MCF 10A (cell line): ENCODE measurements at regions of chr11 and their contacts with region 1.

Region 1: DNA sequence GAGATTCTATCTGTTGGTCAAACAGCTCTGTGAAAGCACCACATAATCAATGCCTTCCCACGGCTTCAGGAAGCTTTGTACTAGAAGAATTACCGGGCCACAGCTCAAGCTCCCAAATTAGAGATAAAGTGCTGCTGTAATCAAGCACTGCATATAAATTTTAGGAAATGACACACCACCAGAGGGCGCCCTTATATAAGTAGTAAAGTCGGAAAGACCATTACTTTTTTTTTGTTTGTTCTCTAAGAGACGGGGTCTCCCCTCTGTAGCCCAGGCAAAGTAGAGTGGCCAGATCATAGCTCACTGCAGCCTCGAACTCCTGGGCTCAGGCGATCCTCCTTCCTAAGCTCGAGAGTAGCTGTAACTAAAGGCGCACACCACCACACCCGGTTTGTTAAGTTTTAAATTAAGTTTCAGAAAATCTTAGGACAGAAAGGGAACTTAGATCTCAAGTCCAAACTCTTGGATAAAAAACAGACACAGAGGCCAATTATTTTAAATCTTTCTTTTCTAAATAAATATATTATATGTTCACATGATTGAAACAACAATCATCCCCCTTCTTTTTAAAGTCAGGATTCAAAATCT is 32.6 kb downstream of the PRCP start:
- DNase-seq: peak; percentile 71
- H3K4me3 Mint-ChIP-seq: no peak overlapping the region
- H3K27ac Mint-ChIP-seq: no peak overlapping the region
- H3K4me1 Mint-ChIP-seq: peaks cover 23% of the 10 kb centered on the region
- H3K27me3 Mint-ChIP-seq: no peaks in the 10 kb centered on the region
- CTCF ChIP-seq: peak; percentile 75

Region 2: DNA sequence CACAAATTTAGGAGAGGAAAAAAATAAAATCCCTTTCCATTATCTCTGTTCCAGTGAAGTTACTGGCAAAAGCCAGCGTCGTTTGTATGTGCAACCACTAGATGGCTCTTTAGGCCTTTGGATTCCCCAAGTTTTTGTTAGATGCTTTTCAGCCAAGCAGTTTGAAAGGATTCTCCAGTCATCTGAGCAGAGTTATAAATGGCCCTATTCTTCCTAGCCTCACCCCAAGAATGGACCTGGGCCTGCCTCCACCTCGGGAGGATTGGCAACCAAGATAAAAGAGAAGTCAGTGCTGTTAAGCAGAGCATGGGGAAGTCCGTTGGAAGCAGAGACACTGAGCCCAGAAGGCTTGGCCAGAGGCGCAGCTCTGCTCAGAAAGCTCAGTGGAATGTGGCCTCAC is 149.3 kb before region 1 on chr11:
- CTCF ChIA-PET with region 1: interaction called, 23 read pairs
- POLR2A ChIA-PET with region 1: interaction called, 3 read pairs
- intact Hi-C with region 1: loop called (anchors 1 kb)
- DNase-seq: peak; percentile 58
- H3K4me3 Mint-ChIP-seq: no peak overlapping the region
- H3K27ac Mint-ChIP-seq: no peak overlapping the region
- H3K4me1 Mint-ChIP-seq: no peaks in the 10 kb centered on the region
- H3K27me3 Mint-ChIP-seq: no peaks in the 10 kb centered on the region
- CTCF ChIP-seq: peak; percentile 60

Region 3: GRCh38 chr11:82845356-82846353 is 21.9 kb before region 1 on chr11:
- CTCF ChIA-PET with region 1: interaction called, 32 read pairs
- POLR2A ChIA-PET with region 1: no interaction called
- intact Hi-C with region 1: no loop called
- DNase-seq: no peak
- H3K4me3 Mint-ChIP-seq: no peak overlapping the region
- H3K27ac Mint-ChIP-seq: peak overlapping the region; percentile 63
- H3K4me1 Mint-ChIP-seq: peaks cover 5% of the 10 kb centered on the region
- H3K27me3 Mint-ChIP-seq: no peaks in the 10 kb centered on the region
- CTCF ChIP-seq: no peak

Region 4: GRCh38 chr11:82889133-82890001 is 21.8 kb after region 1 on chr11:
- CTCF ChIA-PET with region 1: interaction called, 30 read pairs
- POLR2A ChIA-PET with region 1: interaction called, 5 read pairs
- intact Hi-C with region 1: no loop called
- DNase-seq: no peak
- H3K4me3 Mint-ChIP-seq: no peak overlapping the region
- H3K27ac Mint-ChIP-seq: no peak overlapping the region
- H3K4me1 Mint-ChIP-seq: no peaks in the 10 kb centered on the region
- H3K27me3 Mint-ChIP-seq: no peaks in the 10 kb centered on the region
- CTCF ChIP-seq: no peak

Region 5: DNA sequence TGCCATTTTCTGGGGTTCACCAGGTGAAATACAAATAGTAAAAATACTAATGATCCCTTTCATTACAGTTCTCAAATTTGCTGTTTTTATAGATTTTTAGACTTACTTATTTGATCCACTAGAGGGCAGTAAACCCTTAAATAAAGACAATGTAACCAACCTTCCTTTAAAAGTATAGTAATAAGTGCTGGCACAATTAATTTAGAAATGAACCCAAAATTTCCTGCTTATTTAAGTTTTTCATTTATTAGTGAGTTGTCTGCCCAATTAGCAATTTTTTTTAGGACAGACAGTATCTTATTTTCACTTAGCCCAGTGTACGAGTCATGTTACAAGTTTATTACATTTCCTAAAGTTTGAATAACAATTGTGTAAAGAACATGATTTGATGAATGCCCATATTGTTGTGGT is 38.7 kb after region 1 on chr11:
- CTCF ChIA-PET with region 1: interaction called, 101 read pairs
- POLR2A ChIA-PET with region 1: interaction called, 75 read pairs
- intact Hi-C with region 1: no loop called
- DNase-seq: peak; percentile 40
- H3K4me3 Mint-ChIP-seq: peak overlapping the region; percentile 37
- H3K27ac Mint-ChIP-seq: peak overlapping the region; percentile 40
- H3K4me1 Mint-ChIP-seq: peaks cover 34% of the 10 kb centered on the region
- H3K27me3 Mint-ChIP-seq: no peaks in the 10 kb centered on the region
- CTCF ChIP-seq: peak; percentile 46

Region 6: GRCh38 chr11:83219095-83219494 is 351.5 kb after region 1 on chr11:
- CTCF ChIA-PET with region 1: interaction called, 11 read pairs
- POLR2A ChIA-PET with region 1: no interaction called
- intact Hi-C with region 1: no loop called
- DNase-seq: peak; percentile 25
- H3K4me3 Mint-ChIP-seq: no peak overlapping the region
- H3K27ac Mint-ChIP-seq: no peak overlapping the region
- H3K4me1 Mint-ChIP-seq: peaks cover 6% of the 10 kb centered on the region
- H3K27me3 Mint-ChIP-seq: no peaks in the 10 kb centered on the region
- CTCF ChIP-seq: no peak